IMR-90 (cell line): ENCODE measurements at regions of chr7 and their contacts with region 1.

Region 1: GRCh38 chr7:23597094-23598091 is at the start of gene CCDC126:
- DNase-seq: peak; percentile 87
- ATAC-seq: peak; percentile 96
- H3K4me3 ChIP-seq: peak within 1 kb of the TSS; percentile 83
- H3K27ac ChIP-seq: peak within 1 kb of the TSS; percentile 83
- H3K4me1 ChIP-seq: peaks cover 4% of the 10 kb centered on the region
- H3K27me3 ChIP-seq: peaks cover 4% of the 10 kb centered on the region; the same call in 1 of the 2 replicates
- CTCF ChIP-seq: no peak
- POLR2A ChIP-seq: peak; percentile 59; the same call in 1 of the 2 replicates
- RAD21 ChIP-seq: no peak
- total RNA-seq, gene CCDC126: 5.6 and 10.6 TPM in 2 replicates

Region 2: DNA sequence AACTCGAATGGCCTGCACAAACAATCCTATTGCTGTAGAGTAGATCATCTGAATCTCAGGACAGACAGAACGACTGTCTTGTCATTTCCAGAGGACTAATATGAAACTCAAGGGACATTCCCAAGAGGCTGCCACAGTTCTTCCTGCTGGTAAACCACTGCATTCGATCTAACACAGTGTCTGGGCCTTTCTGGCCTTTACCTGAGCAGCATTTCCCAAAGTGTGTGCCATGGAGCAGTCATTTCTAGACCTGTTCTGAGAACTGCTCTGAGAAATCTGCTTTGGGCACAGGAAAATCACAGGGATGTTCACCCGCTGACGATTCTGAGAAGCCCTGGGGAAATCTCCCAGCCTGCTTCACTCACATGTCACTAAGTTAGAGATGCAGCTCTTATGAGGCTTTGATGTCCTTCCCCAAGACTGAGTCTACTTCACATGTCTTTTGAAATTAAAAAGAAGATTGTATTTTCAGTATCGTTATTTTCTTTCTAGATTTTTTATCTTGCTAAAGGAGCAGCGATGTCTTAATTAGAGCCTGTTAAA is 332.4 kb before region 1 on chr7:
- CTCF ChIA-PET with region 1: no interaction called
- POLR2A ChIA-PET with region 1: no interaction called
- dilution Hi-C with region 1: no loop called
- in situ Hi-C with region 1: no loop called
- intact Hi-C with region 1: no loop called
- DNase-seq: no peak
- ATAC-seq: no peak
- H3K4me3 ChIP-seq: no peak overlapping the region
- H3K27ac ChIP-seq: no peak overlapping the region
- H3K4me1 ChIP-seq: no peaks in the 10 kb centered on the region
- H3K27me3 ChIP-seq: peaks cover 13% of the 10 kb centered on the region
- CTCF ChIP-seq: no peak
- POLR2A ChIP-seq: no peak
- RAD21 ChIP-seq: no peak

Region 3: GRCh38 chr7:23607866-23608265 is 10.5 kb after region 1 on chr7:
- CTCF ChIA-PET with region 1: no interaction called
- POLR2A ChIA-PET with region 1: no interaction called
- dilution Hi-C with region 1: no loop called
- in situ Hi-C with region 1: no loop called
- intact Hi-C with region 1: no loop called
- DNase-seq: no peak
- ATAC-seq: no peak
- H3K4me3 ChIP-seq: no peak overlapping the region
- H3K27ac ChIP-seq: no peak overlapping the region
- H3K4me1 ChIP-seq: peaks cover 3% of the 10 kb centered on the region; the same call in 1 of the 2 replicates
- H3K27me3 ChIP-seq: no peaks in the 10 kb centered on the region
- CTCF ChIP-seq: no peak
- POLR2A ChIP-seq: no peak
- RAD21 ChIP-seq: no peak

Region 4: DNA sequence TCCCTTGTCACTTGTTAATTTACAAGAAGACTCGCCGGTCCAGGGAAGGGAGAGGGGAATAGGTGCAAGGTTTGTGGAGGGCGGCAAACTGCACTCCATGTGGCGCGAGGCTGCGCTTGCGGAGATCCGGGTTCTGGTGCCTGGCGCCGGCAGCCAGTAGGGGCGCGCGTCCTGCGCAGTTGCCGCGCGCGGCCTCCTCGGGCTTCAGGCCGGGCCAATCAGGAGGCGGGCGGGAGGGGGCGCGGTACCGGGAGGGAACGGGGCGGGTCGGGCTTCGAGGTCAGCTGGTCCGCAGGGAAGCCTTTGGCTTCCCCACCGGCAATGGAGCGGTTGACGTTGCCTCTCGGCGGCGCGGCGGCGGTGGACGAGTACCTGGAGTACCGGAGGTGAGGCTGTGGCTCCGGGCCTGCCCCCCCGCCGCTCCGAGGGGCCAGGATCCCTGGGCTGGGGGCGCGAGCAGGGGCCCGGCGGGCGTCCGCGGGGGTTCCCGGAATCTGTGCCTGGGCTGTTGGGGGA is 82.6 kb after region 1 on chr7 and contains the start of gene FAM221A:
- CTCF ChIA-PET with region 1: no interaction called
- POLR2A ChIA-PET with region 1: no interaction called
- dilution Hi-C with region 1: no loop called
- in situ Hi-C with region 1: loop called (anchors 10 kb)
- intact Hi-C with region 1: loop called (anchors 5 kb)
- DNase-seq: peak; percentile 67
- ATAC-seq: peak; percentile 99
- H3K4me3 ChIP-seq: peak within 1 kb of the TSS; percentile 59
- H3K27ac ChIP-seq: no peak within 1 kb of the TSS
- H3K4me1 ChIP-seq: no peaks in the 10 kb centered on the region
- H3K27me3 ChIP-seq: no peaks in the 10 kb centered on the region
- CTCF ChIP-seq: peak; percentile 61
- POLR2A ChIP-seq: no peak
- RAD21 ChIP-seq: no peak
- total RNA-seq, gene FAM221A: 1.1 and 1.4 TPM in 2 replicates

Region 5: GRCh38 chr7:23833405-23833804 is 236.0 kb after region 1 on chr7:
- CTCF ChIA-PET with region 1: no interaction called
- POLR2A ChIA-PET with region 1: no interaction called
- dilution Hi-C with region 1: no loop called
- in situ Hi-C with region 1: no loop called
- intact Hi-C with region 1: no loop called
- DNase-seq: no peak
- ATAC-seq: no peak
- H3K4me3 ChIP-seq: no peak overlapping the region
- H3K27ac ChIP-seq: no peak overlapping the region
- H3K4me1 ChIP-seq: no peaks in the 10 kb centered on the region
- H3K27me3 ChIP-seq: no peaks in the 10 kb centered on the region
- CTCF ChIP-seq: no peak
- POLR2A ChIP-seq: no peak
- RAD21 ChIP-seq: no peak